ENCODE measurements at regions of chr11 and their contacts with region 1.

Region 1: DNA sequence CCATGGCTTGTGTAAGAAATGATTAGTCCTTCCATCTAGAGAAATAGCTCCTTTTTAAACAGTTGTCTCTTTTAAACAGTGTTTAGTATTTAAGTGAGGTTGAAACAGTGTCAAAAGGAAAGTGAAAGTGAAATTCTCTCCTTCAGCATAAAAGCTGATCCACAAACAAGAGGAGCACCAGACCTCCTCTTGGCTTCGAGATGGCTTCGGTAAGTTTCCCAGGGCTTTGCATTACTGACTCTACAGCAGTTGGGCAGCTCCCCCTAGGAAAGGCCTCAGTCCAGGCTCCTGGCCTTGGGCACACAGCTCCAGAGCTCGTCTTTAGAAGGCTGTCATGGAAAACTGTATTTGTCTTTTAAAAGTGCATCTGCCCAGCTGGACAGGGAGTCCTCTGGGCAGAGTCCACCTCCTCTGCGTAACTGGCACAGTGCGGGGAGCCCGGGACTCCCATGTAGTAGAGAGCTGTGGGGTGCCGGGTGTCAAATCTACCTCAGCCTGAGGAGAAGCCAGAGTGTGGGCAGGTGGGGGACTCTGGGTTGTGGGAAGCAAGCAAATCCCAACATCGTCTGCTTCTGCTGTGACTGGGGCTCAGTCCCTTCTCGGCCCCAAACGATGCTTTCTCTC is at the start of gene PLAAT4:
- DNase-seq: peak; percentile 52 to 77
- ATAC-seq: peak; percentile 59 to 71 (median 64)
- H3K4me3 ChIP-seq: peak within 1 kb of the TSS; percentile 75
- H3K4me3 Mint-ChIP-seq: peak within 1 kb of the TSS; percentile 96
- H3K27ac ChIP-seq: peak within 1 kb of the TSS; percentile 86
- H3K27ac Mint-ChIP-seq: peak within 1 kb of the TSS; percentile 93 to 97
- H3K4me1 ChIP-seq: peaks cover 76% of the 10 kb centered on the region
- H3K4me1 Mint-ChIP-seq: peaks cover 86 to 94% of the 10 kb centered on the region in 2 donors
- H3K27me3 ChIP-seq: no peaks in the 10 kb centered on the region
- H3K27me3 Mint-ChIP-seq: no peaks in the 10 kb centered on the region
- CTCF ChIP-seq: no peak
- total RNA-seq, gene PLAAT4: 204 to 215 (median 210) TPM

Region 2: DNA sequence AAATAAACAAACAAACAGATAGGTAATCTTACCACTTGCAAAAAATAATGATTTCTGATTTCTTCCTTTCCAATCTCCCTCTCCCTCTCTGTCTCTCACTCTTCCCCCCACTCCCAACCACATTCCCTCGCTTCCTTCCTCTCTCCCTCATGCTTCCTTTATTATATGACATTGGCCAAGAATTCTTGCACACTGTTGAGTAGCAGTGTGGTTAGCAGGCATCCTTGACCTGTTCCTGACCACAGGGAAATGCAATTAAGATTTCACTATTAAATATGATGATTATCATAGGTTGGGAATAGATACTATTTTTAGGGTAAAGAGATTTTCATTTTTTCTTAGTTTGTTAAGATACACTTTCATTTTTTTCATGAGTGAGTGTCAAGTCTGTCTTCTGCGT is 14.9 kb before region 1 on chr11:
- intact Hi-C with region 1: no loop called
- DNase-seq: no peak
- ATAC-seq: no peak
- H3K4me3 ChIP-seq: no peak overlapping the region
- H3K4me3 Mint-ChIP-seq: no peak overlapping the region
- H3K27ac ChIP-seq: no peak overlapping the region
- H3K27ac Mint-ChIP-seq: peak overlapping the region in 1 of 2 donors; percentile 38
- H3K4me1 ChIP-seq: peaks cover 5% of the 10 kb centered on the region
- H3K4me1 Mint-ChIP-seq: peaks cover 9 to 23% of the 10 kb centered on the region in 2 donors
- H3K27me3 ChIP-seq: no peaks in the 10 kb centered on the region
- H3K27me3 Mint-ChIP-seq: no peaks in the 10 kb centered on the region
- CTCF ChIP-seq: no peak

Region 3: DNA sequence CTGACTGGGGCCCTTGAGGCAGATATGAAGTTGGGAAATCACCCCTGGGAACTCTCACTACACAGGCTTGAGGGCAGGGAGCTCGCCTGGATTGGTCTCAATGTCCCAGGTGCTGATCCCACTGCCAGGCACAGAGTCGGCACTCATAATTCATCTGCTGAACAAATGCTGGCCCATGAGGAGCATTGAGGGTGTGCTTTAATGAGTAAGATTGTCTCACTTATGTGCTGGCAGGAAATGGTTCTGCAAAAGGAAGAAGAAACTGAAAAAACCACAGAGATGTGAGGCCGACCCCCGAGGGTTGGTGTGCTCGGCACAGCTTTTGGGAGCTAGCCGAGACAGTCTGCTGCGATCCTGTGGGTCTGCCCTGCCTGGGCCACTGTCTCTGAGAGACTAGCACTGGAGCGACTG is 17.0 kb after region 1 on chr11:
- intact Hi-C with region 1: loop called (anchors 1 kb)
- DNase-seq: peak; percentile 71 to 80
- ATAC-seq: peak; percentile 77 to 86 (median 86)
- H3K4me3 ChIP-seq: no peak overlapping the region
- H3K4me3 Mint-ChIP-seq: peak overlapping the region; percentile 85
- H3K27ac ChIP-seq: peak overlapping the region; percentile 93
- H3K27ac Mint-ChIP-seq: peak overlapping the region; percentile 97 to 98
- H3K4me1 ChIP-seq: peaks cover 48% of the 10 kb centered on the region
- H3K4me1 Mint-ChIP-seq: peaks cover 58 to 60% of the 10 kb centered on the region in 2 donors
- H3K27me3 ChIP-seq: no peaks in the 10 kb centered on the region
- H3K27me3 Mint-ChIP-seq: no peaks in the 10 kb centered on the region
- CTCF ChIP-seq: no peak